ENCODE measurements at regions of chr3 and their contacts with region 1.

Region 1: GRCh38 chr3:170221924-170222646 is at the start of gene PRKCI:
- DNase-seq: peak; percentile 89 to 98 (median 96)

Region 2: GRCh38 chr3:170154569-170155143 is 67.4 kb before region 1 on chr3:
- intact Hi-C with region 1: no loop called
- DNase-seq: no peak

Region 3: DNA sequence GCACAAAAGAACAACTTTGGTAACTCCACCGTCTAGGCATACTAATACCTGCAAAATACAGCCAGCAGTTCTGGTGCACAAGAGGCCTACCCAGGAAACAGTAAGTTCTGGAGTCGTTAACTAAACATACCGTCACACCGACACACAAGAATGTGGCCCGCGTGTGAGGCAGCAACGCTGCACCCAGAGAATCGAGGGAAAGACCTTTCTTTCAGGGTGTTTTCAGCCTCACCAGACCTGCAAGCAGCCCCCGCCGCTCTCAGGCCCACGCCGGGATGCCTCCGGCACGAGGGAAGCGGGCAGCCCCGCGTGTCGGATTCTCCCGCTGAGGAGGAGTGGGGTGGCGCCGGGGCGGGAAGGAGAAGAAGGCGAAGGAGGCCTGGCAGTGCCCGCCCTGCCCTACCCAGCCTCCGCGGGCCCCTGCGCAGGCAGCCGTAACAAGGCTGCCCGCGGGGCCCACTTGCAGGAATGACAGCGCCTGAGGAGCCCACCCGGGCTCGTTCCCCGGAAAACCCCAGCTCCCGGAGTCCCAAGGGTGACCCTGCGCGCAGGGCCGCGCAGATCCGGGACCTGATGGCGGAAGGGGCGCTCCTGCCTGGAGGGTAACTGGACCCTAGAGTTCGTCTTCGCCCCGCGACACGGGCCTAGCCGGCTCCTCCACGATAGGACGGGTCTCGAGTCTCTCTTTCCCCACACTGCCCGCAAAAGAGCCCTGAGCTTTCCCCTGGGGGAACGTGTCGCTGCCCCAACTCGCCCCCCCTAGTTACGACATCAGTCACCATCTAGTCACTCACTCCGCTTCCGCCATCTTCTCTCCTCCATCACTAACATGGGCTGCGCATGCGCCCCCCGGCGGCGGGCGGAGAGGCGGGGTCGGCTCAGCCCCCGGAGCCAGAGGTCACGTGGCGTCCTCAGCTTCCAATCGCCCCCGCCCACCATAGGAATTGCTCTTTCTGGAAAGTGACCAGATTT is 40.9 kb before region 1 on chr3 and contains the start of gene PHC3:
- intact Hi-C with region 1: loop called (anchors 5 kb)
- DNase-seq: peak; percentile 84 to 98 (median 95)